Panc1 (cell line): ENCODE measurements at regions of chr12 and their contacts with region 1.

Region 1: GRCh38 chr12:57124259-57124877 is 3.9 kb upstream of the LRP1 start:
- DNase-seq: peak; percentile 53
- ATAC-seq: peak; percentile 68
- H3K4me3 ChIP-seq: no peak overlapping the region
- H3K27ac ChIP-seq: no peak overlapping the region
- H3K4me1 ChIP-seq: 0 out of 2 replicates have a peak, but pooled peaks cover 3% of the 10 kb centered on the region
- H3K27me3 ChIP-seq: 0 out of 2 replicates have a peak, but pooled peaks cover 3% of the 10 kb centered on the region
- CTCF ChIP-seq: peak; percentile 96

Region 2: DNA sequence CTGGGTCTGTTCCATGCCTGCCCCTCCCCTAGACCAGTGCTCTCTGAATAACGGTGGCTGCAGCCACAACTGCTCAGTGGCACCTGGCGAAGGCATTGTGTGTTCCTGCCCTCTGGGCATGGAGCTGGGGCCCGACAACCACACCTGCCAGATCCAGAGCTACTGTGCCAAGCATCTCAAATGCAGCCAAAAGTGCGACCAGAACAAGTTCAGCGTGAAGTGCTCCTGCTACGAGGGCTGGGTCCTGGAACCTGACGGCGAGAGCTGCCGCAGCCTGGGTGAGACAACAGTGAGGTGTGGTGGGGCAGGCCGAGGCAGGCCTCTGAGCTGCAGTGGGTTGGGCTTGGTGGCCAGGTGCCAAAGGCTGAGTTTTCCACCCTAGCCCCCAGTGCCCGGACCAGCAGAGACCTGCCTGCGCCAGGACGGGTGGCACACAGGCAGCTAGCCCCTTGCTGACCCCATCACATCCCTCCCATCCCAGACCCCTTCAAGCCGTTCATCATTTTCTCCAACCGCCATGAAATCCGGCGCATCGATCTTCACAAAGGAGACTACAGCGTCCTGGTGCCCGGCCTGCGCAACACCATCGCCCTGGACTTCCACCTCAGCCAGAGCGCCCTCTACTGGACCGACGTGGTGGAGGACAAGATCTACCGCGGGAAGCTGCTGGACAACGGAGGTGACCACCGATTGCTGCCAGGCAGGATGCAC is 51.2 kb after region 1 on chr12:
- CTCF ChIA-PET with region 1: interaction called, 15 read pairs
- POLR2A ChIA-PET with region 1: no interaction called
- in situ Hi-C with region 1: no loop called
- intact Hi-C with region 1: loop called (anchors 2 kb)
- DNase-seq: peak; percentile 17
- ATAC-seq: peak; percentile 81
- H3K4me3 ChIP-seq: no peak overlapping the region
- H3K27ac ChIP-seq: no peak overlapping the region
- H3K4me1 ChIP-seq: no peaks in the 10 kb centered on the region
- H3K27me3 ChIP-seq: no peaks in the 10 kb centered on the region
- CTCF ChIP-seq: peak; percentile 94

Region 3: GRCh38 chr12:57182921-57183790 is 58.8 kb after region 1 on chr12:
- CTCF ChIA-PET with region 1: interaction called, 12 read pairs
- POLR2A ChIA-PET with region 1: no interaction called
- in situ Hi-C with region 1: no loop called
- intact Hi-C with region 1: no loop called
- DNase-seq: peak; percentile 59
- ATAC-seq: peak; percentile 95
- H3K4me3 ChIP-seq: no peak overlapping the region
- H3K27ac ChIP-seq: no peak overlapping the region
- H3K4me1 ChIP-seq: no peaks in the 10 kb centered on the region
- H3K27me3 ChIP-seq: no peaks in the 10 kb centered on the region
- CTCF ChIP-seq: peak; percentile 94

Region 4: DNA sequence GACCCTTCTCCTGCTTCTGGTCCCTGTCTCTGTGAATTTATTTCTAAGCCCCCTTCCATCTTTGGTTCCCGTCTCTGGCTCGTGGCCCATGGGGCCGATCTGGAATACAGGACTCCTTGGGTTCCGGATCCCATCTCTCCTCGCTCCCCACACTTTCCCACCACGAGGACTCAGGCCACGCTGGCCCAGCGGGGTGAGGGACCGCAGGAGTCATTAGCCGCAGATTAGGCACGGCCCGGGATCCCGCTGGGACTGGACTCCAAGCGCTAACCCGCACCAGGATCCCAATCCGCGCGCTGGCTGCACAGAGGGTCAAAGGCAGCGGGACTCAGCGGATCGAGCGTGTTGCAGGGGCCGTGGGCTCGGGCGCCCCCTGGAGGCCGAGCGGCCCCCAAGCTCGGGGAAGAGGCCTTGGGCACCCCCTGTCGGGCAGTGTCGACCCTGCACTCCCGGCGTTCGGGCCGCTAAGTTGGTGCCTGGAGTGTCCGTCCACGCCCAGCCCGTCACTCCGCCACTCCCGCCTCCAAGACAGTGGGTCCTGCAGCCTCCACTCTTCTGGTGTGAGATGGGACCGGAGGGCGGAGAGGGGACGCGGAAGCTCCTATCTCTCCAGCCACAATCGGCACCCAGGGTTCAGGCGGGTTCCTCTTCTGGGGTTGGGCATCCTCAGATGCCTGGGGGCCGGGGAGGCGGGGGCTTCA is 114.6 kb after region 1 on chr12:
- CTCF ChIA-PET with region 1: interaction called, 10 read pairs
- POLR2A ChIA-PET with region 1: no interaction called
- in situ Hi-C with region 1: no loop called
- intact Hi-C with region 1: no loop called
- DNase-seq: peak; percentile 63
- ATAC-seq: peak; percentile 73
- H3K4me3 ChIP-seq: peak overlapping the region; percentile 56 to 67
- H3K27ac ChIP-seq: no peak overlapping the region; the same call in 1 of the 2 replicates
- H3K4me1 ChIP-seq: peaks cover 21% of the 10 kb centered on the region
- H3K27me3 ChIP-seq: peaks cover 2% of the 10 kb centered on the region; the same call in 1 of the 2 replicates
- CTCF ChIP-seq: peak; percentile 100